ENCODE measurements at regions of chr5 and their contacts with region 1.

Region 1: DNA sequence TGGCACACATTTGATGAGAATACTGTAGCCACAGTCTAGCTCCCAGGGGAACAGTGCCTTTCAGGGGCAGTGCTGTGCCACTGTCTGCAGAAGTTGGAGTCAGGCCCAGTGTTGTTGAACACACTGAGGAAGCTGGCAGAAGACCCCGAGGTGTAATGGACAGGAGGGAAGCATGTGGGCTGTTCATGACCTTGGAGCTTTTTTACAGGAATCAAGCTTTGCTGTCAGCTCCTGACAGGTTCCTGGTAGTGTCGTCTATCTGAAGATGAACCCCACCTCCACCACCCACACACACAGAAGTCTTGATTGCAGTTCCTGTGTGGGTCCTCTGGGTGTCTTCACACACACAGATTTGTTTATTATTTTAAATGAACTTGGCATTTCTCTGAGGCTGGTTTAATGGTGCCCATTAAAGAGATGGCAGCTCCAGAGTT is 40.3 kb upstream of the TNFAIP8 start:
- DNase-seq: peak in 4 of 5 donors; percentile 36 to 69 (median 64)
- H3K4me3 ChIP-seq: no peak overlapping the region
- H3K4me3 Mint-ChIP-seq: peak overlapping the region; percentile 28 to 70 (median 64)
- H3K27ac ChIP-seq: peak overlapping the region; percentile 20
- H3K27ac Mint-ChIP-seq: peak overlapping the region; percentile 78 to 96 (median 87)
- H3K4me1 ChIP-seq: peaks cover 94% of the 10 kb centered on the region
- H3K4me1 Mint-ChIP-seq: peaks cover 89 to 95% (median 94%) of the 10 kb centered on the region in 3 donors
- H3K27me3 ChIP-seq: no peaks in the 10 kb centered on the region
- H3K27me3 Mint-ChIP-seq: no peaks in the 10 kb centered on the region

Region 2: GRCh38 chr5:119255571-119256356 is 59.8 kb before region 1 on chr5:
- CTCF ChIA-PET with region 1: no interaction called
- POLR2A ChIA-PET with region 1: no interaction called
- DNase-seq: no peak
- H3K4me3 ChIP-seq: no peak overlapping the region
- H3K4me3 Mint-ChIP-seq: no peak overlapping the region
- H3K27ac ChIP-seq: no peak overlapping the region
- H3K27ac Mint-ChIP-seq: no peak overlapping the region
- H3K4me1 ChIP-seq: no peaks in the 10 kb centered on the region
- H3K4me1 Mint-ChIP-seq: peaks cover 0 to 1% (median 0%) of the 10 kb centered on the region in 3 donors
- H3K27me3 ChIP-seq: no peaks in the 10 kb centered on the region
- H3K27me3 Mint-ChIP-seq: no peaks in the 10 kb centered on the region

Region 3: GRCh38 chr5:119274767-119275130 is 40.8 kb before region 1 on chr5:
- CTCF ChIA-PET with region 1: interaction called, 12 read pairs
- POLR2A ChIA-PET with region 1: interaction called, 4 read pairs
- DNase-seq: no peak
- H3K4me3 ChIP-seq: peak overlapping the region; percentile 76
- H3K4me3 Mint-ChIP-seq: peak overlapping the region; percentile 97 to 100 (median 98)
- H3K27ac ChIP-seq: peak overlapping the region; percentile 5
- H3K27ac Mint-ChIP-seq: peak overlapping the region; percentile 81 to 97 (median 95)
- H3K4me1 ChIP-seq: peaks cover 88% of the 10 kb centered on the region
- H3K4me1 Mint-ChIP-seq: peaks cover 89 to 100% (median 95%) of the 10 kb centered on the region in 3 donors
- H3K27me3 ChIP-seq: no peaks in the 10 kb centered on the region
- H3K27me3 Mint-ChIP-seq: peaks cover 0 to 6% of the 10 kb centered on the region in 2 donors

Region 4: DNA sequence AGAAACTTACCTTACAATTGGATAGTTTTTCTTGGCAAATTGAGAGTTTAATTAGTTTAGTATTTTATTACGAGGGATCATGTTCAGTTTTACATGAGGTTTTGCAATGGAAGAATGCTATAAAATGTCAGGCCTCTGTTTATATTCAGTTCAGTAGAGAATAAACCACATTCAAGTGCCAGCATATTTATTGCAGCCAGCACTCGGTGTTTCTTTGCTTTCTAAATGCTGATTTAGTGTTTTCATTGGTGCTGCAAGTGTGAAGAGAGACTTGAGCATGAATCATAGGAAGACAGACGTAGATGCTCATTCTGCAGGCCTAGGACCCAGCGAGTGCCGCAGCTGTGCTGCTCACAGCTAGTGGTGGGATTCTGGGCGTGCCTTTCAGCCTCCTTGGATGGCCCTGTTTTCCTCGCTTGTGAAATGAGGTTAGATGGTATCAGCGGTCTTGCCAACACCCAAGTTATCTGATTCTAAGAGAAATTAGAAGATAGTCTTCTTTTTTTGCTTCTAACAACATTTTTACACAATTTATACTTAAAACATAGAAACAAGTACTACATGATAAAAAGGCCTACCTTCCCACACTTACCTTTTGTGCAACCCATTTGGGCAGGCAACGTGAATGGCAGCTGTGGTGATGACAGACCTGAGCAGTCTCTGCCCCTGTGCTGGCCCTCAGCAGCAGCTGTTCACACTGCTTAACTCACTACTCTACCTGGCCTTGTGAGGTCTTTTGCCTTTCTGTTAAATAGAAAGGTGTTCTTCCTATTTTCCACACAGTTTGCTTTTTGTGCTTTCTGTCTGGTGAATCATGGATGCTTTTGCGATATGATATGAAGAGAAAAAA is 13.4 kb after region 1 on chr5:
- CTCF ChIA-PET with region 1: interaction called, 39 read pairs
- POLR2A ChIA-PET with region 1: interaction called, 10 read pairs
- DNase-seq: peak; percentile 58 to 81 (median 61)
- H3K4me3 ChIP-seq: peak overlapping the region; percentile 38
- H3K4me3 Mint-ChIP-seq: peak overlapping the region; percentile 55 to 84 (median 75)
- H3K27ac ChIP-seq: peak overlapping the region; percentile 62
- H3K27ac Mint-ChIP-seq: peak overlapping the region; percentile 82 to 99 (median 94)
- H3K4me1 ChIP-seq: peaks cover 96% of the 10 kb centered on the region
- H3K4me1 Mint-ChIP-seq: peaks cover 89 to 98% (median 97%) of the 10 kb centered on the region in 3 donors
- H3K27me3 ChIP-seq: no peaks in the 10 kb centered on the region
- H3K27me3 Mint-ChIP-seq: no peaks in the 10 kb centered on the region

Region 5: GRCh38 chr5:119355685-119356611 is 40.4 kb after region 1 on chr5 and contains the start of gene TNFAIP8:
- CTCF ChIA-PET with region 1: interaction called, 17 read pairs
- POLR2A ChIA-PET with region 1: interaction called, 10 read pairs
- DNase-seq: peak in 3 of 5 donors; percentile 38 to 53 (median 39)
- H3K4me3 ChIP-seq: peak within 1 kb of the TSS; percentile 37
- H3K4me3 Mint-ChIP-seq: peak within 1 kb of the TSS; percentile 81 to 95 (median 91)
- H3K27ac ChIP-seq: peak within 1 kb of the TSS; percentile 21
- H3K27ac Mint-ChIP-seq: peak within 1 kb of the TSS; percentile 76 to 95 (median 90)
- H3K4me1 ChIP-seq: peaks cover 88% of the 10 kb centered on the region
- H3K4me1 Mint-ChIP-seq: peaks cover 89 to 99% (median 98%) of the 10 kb centered on the region in 3 donors
- H3K27me3 ChIP-seq: no peaks in the 10 kb centered on the region
- H3K27me3 Mint-ChIP-seq: no peaks in the 10 kb centered on the region
- total RNA-seq, gene TNFAIP8: 295 to 311 TPM

Region 6: GRCh38 chr5:119411935-119412602 is 96.5 kb after region 1 on chr5:
- CTCF ChIA-PET with region 1: interaction called, 82 read pairs
- POLR2A ChIA-PET with region 1: no interaction called
- DNase-seq: peak in 4 of 5 donors; percentile 45 to 67 (median 62)
- H3K4me3 ChIP-seq: peak overlapping the region; percentile 71
- H3K4me3 Mint-ChIP-seq: peak overlapping the region; percentile 22 to 88 (median 80)
- H3K27ac ChIP-seq: peak overlapping the region; percentile 34
- H3K27ac Mint-ChIP-seq: peak overlapping the region in 6 of 8 donors; percentile 30 to 80 (median 49)
- H3K4me1 ChIP-seq: peaks cover 9% of the 10 kb centered on the region
- H3K4me1 Mint-ChIP-seq: peaks cover 10 to 20% (median 14%) of the 10 kb centered on the region in 3 donors
- H3K27me3 ChIP-seq: no peaks in the 10 kb centered on the region
- H3K27me3 Mint-ChIP-seq: peaks cover 3 to 4% of the 10 kb centered on the region in 2 donors